ENCODE measurements at regions of chr7 and their contacts with region 1.

Region 1: GRCh38 chr7:101153969-101154692 is at the start of gene AP1S1:
- DNase-seq: peak; percentile 98
- ATAC-seq: peak; percentile 91
- H3K4me3 Mint-ChIP-seq: peak within 1 kb of the TSS; percentile 80
- H3K27ac Mint-ChIP-seq: peak within 1 kb of the TSS; percentile 37; the same call in 1 of the 2 replicates
- H3K4me1 Mint-ChIP-seq: peaks cover 28% of the 10 kb centered on the region
- H3K27me3 Mint-ChIP-seq: peaks cover 18% of the 10 kb centered on the region
- CTCF ChIP-seq: no peak
- total RNA-seq, gene AP1S1: 60.7 to 80.0 TPM (median 78.2 TPM) in 3 replicates

Region 2: GRCh38 chr7:101017064-101017777 is 136.9 kb before region 1 on chr7:
- CTCF ChIA-PET with region 1: no interaction called
- POLR2A ChIA-PET with region 1: no interaction called
- DNase-seq: peak; percentile 56
- ATAC-seq: peak; percentile 52
- H3K4me3 Mint-ChIP-seq: peak overlapping the region; percentile 78
- H3K27ac Mint-ChIP-seq: no peak overlapping the region
- H3K4me1 Mint-ChIP-seq: peaks cover 21% of the 10 kb centered on the region
- H3K27me3 Mint-ChIP-seq: peaks cover 3% of the 10 kb centered on the region; the same call in 1 of the 2 replicates
- CTCF ChIP-seq: no peak

Region 3: DNA sequence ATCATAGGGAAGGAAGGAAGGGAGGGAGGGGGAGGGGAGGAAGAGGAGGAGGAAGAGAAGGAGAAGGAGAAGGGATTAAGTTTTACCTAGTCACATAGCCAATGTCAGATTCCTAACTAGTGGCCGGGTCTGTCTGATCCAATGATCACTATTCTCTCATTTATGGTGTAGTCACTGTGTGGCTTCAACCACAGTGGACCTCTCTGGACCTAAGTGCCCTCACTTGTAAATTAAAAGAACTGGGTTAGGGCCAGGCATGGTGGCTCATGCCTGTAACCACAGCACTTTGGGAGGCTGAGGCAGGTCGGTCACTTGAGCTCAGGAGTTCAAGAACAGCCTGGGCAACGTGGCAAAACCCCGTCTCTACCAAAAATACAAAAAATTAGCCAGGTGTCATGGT is 33.8 kb before region 1 on chr7:
- CTCF ChIA-PET with region 1: no interaction called
- POLR2A ChIA-PET with region 1: no interaction called
- DNase-seq: no peak
- ATAC-seq: no peak
- H3K4me3 Mint-ChIP-seq: no peak overlapping the region
- H3K27ac Mint-ChIP-seq: no peak overlapping the region
- H3K4me1 Mint-ChIP-seq: peaks cover 27% of the 10 kb centered on the region
- H3K27me3 Mint-ChIP-seq: peaks cover 4% of the 10 kb centered on the region; the same call in 1 of the 2 replicates
- CTCF ChIP-seq: no peak

Region 4: DNA sequence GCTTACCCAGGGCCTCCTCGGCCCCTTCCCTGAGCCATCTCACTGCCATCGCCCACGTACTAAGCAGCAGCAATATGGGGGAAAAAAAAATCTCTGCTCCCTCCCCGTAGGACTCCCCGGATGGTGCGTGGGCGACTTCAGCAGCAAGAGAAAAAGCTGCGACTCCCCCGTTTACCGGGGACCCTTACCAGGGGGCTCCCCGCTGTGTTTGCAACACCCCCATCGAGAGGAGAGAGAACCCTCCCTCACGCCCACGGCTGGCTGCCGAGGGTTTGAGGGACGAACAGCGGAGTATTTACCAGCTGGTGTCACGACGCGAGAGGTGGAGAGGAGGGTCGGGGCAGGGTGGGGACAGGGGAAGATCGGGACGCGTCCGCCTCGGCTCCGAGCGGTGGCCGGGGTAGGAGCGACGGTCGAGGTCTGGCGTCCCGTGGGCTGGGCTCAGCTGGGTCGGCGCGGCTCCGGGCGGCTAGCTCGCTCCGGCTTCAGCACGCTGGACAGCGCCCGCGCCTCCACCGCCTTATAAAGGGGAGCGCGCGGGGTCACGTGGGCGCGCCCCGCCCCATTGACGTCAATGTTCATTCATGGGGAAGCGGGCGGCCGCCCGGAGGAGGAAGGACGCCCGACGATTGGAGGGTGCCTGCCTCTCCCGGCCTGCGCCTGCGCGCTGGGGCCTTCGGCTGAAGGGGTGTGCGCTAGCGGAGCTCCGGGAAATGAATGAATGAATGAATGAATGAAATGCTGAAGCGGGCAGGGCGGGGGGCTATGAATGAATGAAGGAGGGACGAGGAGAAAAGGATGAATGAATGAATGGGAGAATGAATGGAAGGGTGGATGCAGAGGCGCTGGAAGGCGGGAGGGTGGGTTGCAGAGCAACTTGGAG is 11.2 kb after region 1 on chr7 and contains the start of gene VGF:
- CTCF ChIA-PET with region 1: interaction called, 25 read pairs
- POLR2A ChIA-PET with region 1: interaction called, 4 read pairs
- DNase-seq: peak; percentile 98
- ATAC-seq: peak; percentile 46
- H3K4me3 Mint-ChIP-seq: peak within 1 kb of the TSS; percentile 81
- H3K27ac Mint-ChIP-seq: peak within 1 kb of the TSS; percentile 20; the same call in 1 of the 2 replicates
- H3K4me1 Mint-ChIP-seq: peaks cover 65% of the 10 kb centered on the region
- H3K27me3 Mint-ChIP-seq: peaks cover 67% of the 10 kb centered on the region
- CTCF ChIP-seq: no peak
- total RNA-seq, gene VGF: 5.2 to 6.4 TPM (median 5.6 TPM) in 3 replicates

Region 5: GRCh38 chr7:101173752-101174244 is 19.7 kb after region 1 on chr7:
- CTCF ChIA-PET with region 1: interaction called, 21 read pairs
- POLR2A ChIA-PET with region 1: interaction called, 3 read pairs
- DNase-seq: peak; percentile 91
- ATAC-seq: peak; percentile 71
- H3K4me3 Mint-ChIP-seq: peak overlapping the region; percentile 74
- H3K27ac Mint-ChIP-seq: no peak overlapping the region
- H3K4me1 Mint-ChIP-seq: peaks cover 43% of the 10 kb centered on the region
- H3K27me3 Mint-ChIP-seq: peaks cover 100% of the 10 kb centered on the region
- CTCF ChIP-seq: no peak

Region 6: DNA sequence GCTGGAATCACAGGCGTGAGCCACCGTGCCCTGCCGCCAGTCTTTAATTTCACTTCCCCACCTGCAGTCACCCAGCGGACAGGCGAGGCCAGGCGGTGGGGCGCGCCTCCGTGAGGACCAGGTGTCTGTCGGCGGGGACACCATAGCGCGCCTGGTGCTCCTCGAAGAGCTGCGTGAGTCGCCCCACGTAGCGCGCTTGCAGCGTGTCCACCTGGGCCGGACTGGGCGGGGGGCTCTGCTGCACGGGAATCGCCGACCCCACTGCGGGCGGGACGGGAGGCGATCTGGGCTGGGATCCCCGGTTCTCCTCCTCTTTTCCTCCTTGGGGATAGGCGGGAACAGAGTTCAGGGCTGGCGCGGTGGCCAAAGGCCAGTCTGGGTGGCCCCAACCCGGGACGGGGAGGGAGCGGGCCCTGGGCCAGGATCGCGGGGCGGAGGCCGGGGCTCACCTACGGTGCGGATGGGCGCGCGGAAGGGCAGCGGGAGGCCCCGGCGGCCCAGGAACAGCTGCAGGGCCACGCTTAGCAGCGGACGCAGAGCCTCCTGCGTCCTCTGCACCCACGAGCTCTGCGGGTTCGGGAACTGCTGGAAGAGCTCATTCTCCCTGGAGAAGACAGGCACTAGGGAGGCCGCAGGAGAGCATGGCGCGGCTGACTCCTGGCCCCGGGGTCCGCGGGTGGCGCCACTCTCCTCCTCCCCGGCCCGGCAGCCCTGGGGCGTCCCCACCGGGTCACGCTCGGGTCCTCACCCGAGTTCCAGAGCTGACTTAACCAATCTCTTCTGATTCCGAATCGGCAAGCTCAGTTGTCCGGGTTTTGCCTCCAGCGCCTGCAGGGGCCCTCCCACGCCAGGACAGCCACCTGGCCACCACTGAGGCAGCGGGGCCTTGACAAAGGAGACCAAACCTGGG is 47.8 kb after region 1 on chr7:
- CTCF ChIA-PET with region 1: interaction called, 10 read pairs
- POLR2A ChIA-PET with region 1: no interaction called
- DNase-seq: peak; percentile 56
- ATAC-seq: peak; percentile 62
- H3K4me3 Mint-ChIP-seq: peak overlapping the region; percentile 72
- H3K27ac Mint-ChIP-seq: no peak overlapping the region
- H3K4me1 Mint-ChIP-seq: peaks cover 28% of the 10 kb centered on the region
- H3K27me3 Mint-ChIP-seq: peaks cover 16% of the 10 kb centered on the region
- CTCF ChIP-seq: no peak